Activated B cell treated with CpG ODN at 0.5 μM for 24 hours (primary cell): ENCODE measurements at regions of chr20 and their contacts with region 1.

Region 1: GRCh38 chr20:35954200-35954906 is at the start of gene SCAND1:
- DNase-seq: peak; percentile 94
- ATAC-seq: peak; percentile 86
- H3K4me3 Mint-ChIP-seq: peak within 1 kb of the TSS; percentile 100
- H3K27ac Mint-ChIP-seq: peak within 1 kb of the TSS; percentile 100
- H3K4me1 Mint-ChIP-seq: peaks cover 22% of the 10 kb centered on the region
- H3K27me3 Mint-ChIP-seq: no peaks in the 10 kb centered on the region
- CTCF ChIP-seq: peak; percentile 48
- total RNA-seq, gene SCAND1: 35.9 and 43.2 TPM in 2 replicates

Region 2: DNA sequence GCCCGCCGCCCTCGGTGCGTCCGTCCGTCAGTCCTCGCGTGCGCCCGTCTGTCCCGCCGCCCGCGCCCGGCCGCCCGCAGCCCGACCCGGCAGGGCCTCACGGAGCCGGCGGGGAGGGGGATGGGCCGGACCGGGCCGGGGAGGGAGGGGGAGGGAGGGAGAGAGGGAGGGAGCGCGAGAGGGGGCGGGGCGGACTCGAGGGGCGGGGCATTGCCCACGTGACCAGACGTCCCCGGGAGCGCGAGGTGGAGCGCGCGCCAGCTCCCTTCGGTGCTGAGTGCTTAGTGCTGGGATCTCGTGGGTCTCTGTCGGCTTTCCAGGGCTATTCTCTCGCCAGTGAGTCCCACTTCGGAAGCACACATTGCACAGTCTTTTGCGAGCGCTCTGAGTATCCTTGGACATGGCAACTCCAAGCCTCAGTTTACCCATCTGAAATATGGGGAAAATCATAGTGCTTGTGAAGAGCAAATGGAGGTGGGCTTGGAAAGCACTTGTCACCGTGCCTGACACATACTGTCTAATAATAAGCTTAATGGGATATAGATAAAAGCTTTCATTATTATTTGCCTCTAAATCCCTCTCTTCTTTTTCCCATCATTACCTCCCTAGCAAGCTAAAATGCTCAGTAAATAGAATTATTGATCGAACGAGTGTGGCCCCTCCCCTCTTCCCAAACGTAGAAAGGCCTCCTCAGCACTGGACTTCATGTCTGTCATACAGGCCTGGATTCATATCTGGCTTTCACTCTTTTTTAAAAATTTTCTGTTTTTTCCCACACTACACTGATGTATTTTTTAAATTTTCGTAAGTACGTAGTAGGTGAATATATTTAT is 1128.6 kb before region 1 on chr20 and contains the start of gene NCOA6:
- CTCF ChIA-PET with region 1: no interaction called
- POLR2A ChIA-PET with region 1: no interaction called
- intact Hi-C with region 1: loop called (anchors 10 kb)
- DNase-seq: peak; percentile 78
- ATAC-seq: peak; percentile 74
- H3K4me3 Mint-ChIP-seq: peak within 1 kb of the TSS; percentile 97
- H3K27ac Mint-ChIP-seq: peak within 1 kb of the TSS; percentile 90
- H3K4me1 Mint-ChIP-seq: peaks cover 41% of the 10 kb centered on the region
- H3K27me3 Mint-ChIP-seq: no peaks in the 10 kb centered on the region
- CTCF ChIP-seq: no peak
- total RNA-seq, gene NCOA6: 23.7 and 24.0 TPM in 2 replicates

Region 3: GRCh38 chr20:35454881-35455609 is 499.3 kb before region 1 on chr20 and contains the start of gene CEP250:
- CTCF ChIA-PET with region 1: no interaction called
- POLR2A ChIA-PET with region 1: interaction called, 19 read pairs
- intact Hi-C with region 1: loop called (anchors 2 kb)
- DNase-seq: peak; percentile 90
- ATAC-seq: peak; percentile 99
- H3K4me3 Mint-ChIP-seq: peak within 1 kb of the TSS; percentile 93
- H3K27ac Mint-ChIP-seq: peak within 1 kb of the TSS; percentile 99
- H3K4me1 Mint-ChIP-seq: peaks cover 12% of the 10 kb centered on the region
- H3K27me3 Mint-ChIP-seq: no peaks in the 10 kb centered on the region
- CTCF ChIP-seq: no peak
- total RNA-seq, gene CEP250: 49.6 and 54.7 TPM in 2 replicates

Region 4: GRCh38 chr20:35664544-35665221 is 289.7 kb before region 1 on chr20 and contains the starts of genes CPNE1 and RBM12:
- CTCF ChIA-PET with region 1: no interaction called
- POLR2A ChIA-PET with region 1: interaction called, 28 read pairs
- intact Hi-C with region 1: loop called (anchors 2 kb)
- DNase-seq: peak; percentile 94
- ATAC-seq: peak; percentile 77
- H3K4me3 Mint-ChIP-seq: peak within 1 kb of the TSS; percentile 94
- H3K27ac Mint-ChIP-seq: peak within 1 kb of the TSS; percentile 99
- H3K4me1 Mint-ChIP-seq: peaks cover 48% of the 10 kb centered on the region
- H3K27me3 Mint-ChIP-seq: no peaks in the 10 kb centered on the region
- CTCF ChIP-seq: no peak
- total RNA-seq, gene CPNE1: 234 and 264 TPM in 2 replicates
- total RNA-seq, gene RBM12: 129 and 139 TPM in 2 replicates

Region 5: GRCh38 chr20:36017034-36017951 is 62.9 kb after region 1 on chr20:
- CTCF ChIA-PET with region 1: no interaction called
- POLR2A ChIA-PET with region 1: interaction called, 11 read pairs
- intact Hi-C with region 1: no loop called
- DNase-seq: no peak
- ATAC-seq: no peak
- H3K4me3 Mint-ChIP-seq: no peak overlapping the region
- H3K27ac Mint-ChIP-seq: no peak overlapping the region
- H3K4me1 Mint-ChIP-seq: no peaks in the 10 kb centered on the region
- H3K27me3 Mint-ChIP-seq: peaks cover 2% of the 10 kb centered on the region
- CTCF ChIP-seq: no peak

Region 6: DNA sequence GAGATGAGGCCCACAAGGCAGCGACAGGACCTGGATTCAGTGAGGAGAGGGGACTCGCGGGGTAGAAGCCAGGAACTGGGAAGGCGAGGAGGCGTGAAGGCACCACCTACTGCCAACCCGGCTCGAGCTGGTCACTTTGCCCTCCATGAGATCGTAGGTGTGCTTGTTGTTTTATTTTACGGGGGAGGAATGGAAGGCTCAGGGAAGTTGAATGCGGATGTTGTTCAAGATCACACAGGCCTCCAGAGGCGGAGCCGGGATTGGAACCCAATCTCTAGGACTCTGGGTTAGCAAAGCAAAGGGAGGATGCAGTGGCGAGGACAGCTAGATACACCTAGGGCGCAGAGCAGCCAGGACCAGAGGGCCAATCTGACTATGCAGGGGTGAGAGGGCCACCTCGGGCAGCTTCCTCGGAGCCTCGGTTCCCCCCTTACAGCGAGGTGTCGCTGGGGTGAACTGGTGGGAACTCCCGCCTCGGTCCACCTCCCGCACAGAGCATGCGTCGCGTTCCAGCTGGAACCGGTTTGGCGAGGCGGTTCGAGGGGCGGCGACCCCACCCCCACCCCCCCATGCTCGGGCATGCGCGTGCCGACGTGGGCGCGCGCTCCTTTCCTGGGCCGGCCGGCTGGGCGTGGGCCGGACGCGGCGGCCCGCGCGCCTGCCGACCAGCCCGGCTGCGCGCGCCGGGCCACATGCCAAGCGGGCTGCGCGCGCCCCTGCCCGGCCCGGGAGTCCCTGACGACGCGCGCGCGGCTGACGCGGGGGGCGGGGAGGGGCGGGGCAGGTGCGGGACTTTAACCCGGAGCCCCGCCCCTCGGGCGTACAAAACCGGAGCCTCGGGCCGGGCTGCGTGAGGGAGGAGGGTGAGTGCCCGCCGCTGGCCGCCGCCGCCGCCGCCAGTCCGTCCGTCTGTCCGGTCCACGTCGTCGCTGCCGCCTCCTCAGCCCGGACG is 506.6 kb after region 1 on chr20:
- CTCF ChIA-PET with region 1: no interaction called
- POLR2A ChIA-PET with region 1: interaction called, 7 read pairs
- intact Hi-C with region 1: loop called (anchors 1 kb)
- DNase-seq: peak; percentile 85
- ATAC-seq: peak; percentile 75
- H3K4me3 Mint-ChIP-seq: peak overlapping the region; percentile 74
- H3K27ac Mint-ChIP-seq: peak overlapping the region; percentile 91
- H3K4me1 Mint-ChIP-seq: peaks cover 46% of the 10 kb centered on the region
- H3K27me3 Mint-ChIP-seq: no peaks in the 10 kb centered on the region
- CTCF ChIP-seq: no peak

Region 7: GRCh38 chr20:36472637-36473081 is 518.3 kb after region 1 on chr20:
- CTCF ChIA-PET with region 1: no interaction called
- POLR2A ChIA-PET with region 1: no interaction called
- intact Hi-C with region 1: no loop called
- DNase-seq: no peak
- ATAC-seq: peak; percentile 60
- H3K4me3 Mint-ChIP-seq: peak overlapping the region; percentile 63
- H3K27ac Mint-ChIP-seq: peak overlapping the region; percentile 84
- H3K4me1 Mint-ChIP-seq: peaks cover 71% of the 10 kb centered on the region
- H3K27me3 Mint-ChIP-seq: no peaks in the 10 kb centered on the region
- CTCF ChIP-seq: no peak